GM13977 (cell line): ENCODE measurements at regions of chr17 and their contacts with region 1.

Region 1: DNA sequence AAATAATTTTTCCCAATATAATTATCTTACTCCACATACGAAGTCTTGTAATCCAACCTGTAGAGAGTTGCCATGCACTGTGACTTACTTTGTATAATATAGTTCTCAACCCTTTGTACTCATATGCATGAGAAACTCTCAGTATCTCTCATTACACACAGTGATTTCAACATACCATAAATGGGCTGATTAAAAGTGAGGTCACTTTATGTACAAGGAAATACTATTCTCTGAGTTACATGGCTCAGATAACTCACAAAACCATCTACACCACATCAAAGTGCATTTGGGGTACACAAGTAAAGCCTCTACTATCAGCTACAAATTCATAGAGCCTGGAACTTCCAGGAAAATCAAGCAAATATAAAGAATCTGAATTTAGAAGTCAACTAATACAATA is 27.9 kb downstream of the SLFN12 start:
- DNase-seq: no peak
- CTCF ChIP-seq: no peak

Region 2: DNA sequence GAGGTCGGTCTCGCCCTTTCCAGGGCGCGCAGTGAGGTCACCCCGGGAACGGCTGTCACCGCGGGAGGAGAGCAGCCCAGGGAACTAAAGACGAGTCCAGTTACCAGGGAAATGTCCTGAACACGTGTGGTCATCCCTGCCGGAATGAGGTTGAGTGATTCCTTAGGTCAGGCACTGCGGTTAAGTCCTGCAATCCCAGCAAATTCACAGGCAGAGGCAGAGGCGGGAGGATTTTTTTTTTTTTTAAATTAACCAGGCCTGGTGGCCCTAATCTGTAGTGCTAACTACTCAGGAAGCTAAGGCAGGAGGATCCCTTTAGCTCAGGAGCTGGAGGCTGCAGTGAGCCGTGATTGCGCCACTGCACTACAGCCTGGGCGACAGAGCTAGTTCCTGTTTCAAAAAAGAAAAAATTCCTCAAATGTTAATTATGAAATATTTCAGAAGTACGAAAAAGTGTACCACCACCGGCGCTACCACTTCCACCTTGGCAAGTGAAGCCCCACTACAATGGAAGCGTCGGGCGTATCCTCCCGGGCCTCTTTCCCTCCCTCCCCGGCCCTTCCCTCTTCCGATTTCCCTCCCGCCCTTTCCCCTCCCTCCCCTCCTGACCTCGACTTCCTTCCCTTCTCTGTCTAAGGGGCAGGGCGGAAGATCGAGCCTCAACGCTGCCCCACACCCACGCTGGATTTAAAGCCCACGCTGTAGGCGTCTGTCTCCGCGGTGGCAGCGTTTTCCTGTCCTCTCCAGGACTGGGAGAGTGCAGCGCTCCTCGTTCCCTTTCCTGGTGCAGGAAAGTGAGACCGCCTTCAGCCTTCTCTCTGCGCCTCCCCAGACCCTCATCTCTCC is 58.2 kb before region 1 on chr17:
- in situ Hi-C with region 1: loop called (anchors 10 kb)
- DNase-seq: peak; percentile 9
- CTCF ChIP-seq: no peak

Region 3: GRCh38 chr17:35879773-35880654 is 475.7 kb after region 1 on chr17 and contains the start of gene CCL5:
- in situ Hi-C with region 1: no loop called
- DNase-seq: peak; percentile 88
- CTCF ChIP-seq: no peak